ENCODE measurements at regions of chr20 and their contacts with region 1.

Region 1: DNA sequence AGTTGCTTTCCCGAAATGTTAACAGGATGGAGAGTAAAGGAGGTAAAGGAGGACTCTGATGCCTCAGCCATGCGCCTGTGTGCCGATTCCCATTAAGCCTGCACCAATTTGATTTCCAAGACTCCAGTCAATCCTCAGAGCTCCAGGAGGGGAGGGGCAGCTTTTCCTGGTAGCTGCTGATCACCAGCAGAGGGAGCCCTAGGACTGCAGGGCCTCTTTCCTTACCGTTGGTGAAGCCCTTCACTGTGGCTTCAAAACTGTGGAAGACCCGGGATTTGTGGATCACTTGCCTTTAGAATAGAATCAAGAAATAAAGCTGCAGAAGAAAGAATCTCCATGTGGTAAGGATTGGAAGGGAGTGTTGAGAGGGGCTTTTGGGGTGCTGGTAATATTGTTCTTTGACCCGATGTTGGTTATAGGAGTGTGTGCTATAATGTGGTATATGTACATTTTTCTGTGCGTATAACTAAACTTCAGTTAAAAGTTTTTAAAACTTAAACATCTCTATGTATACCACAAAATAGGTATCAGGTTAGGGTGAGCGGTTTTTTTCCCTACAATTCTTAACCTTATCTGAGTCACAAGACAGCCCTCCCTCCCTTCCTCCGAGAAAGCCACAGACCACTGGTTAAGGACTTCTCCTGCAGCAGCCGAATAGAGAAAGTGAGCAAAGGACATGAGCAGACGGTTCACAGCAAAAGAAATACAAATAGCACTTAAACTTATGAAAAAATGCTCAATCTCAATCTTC is 6.9 kb upstream of the OSER1 start:
- DNase-seq: no peak
- ATAC-seq: peak; percentile 80
- H3K4me3 ChIP-seq: no peak overlapping the region
- H3K27ac ChIP-seq: no peak overlapping the region
- H3K4me1 ChIP-seq: peaks cover 14% of the 10 kb centered on the region
- H3K27me3 ChIP-seq: no peaks in the 10 kb centered on the region
- CTCF ChIP-seq: peak; percentile 92 to 97 (median 94)
- EP300 ChIP-seq: no peak
- POLR2A ChIP-seq: no peak
- RAD21 ChIP-seq: peak; percentile 98

Region 2: GRCh38 chr20:44033344-44033743 is 184.2 kb before region 1 on chr20:
- CTCF ChIA-PET with region 1: no interaction called
- POLR2A ChIA-PET with region 1: no interaction called
- RAD21 ChIA-PET with region 1: no interaction called
- SMC1A ChIA-PET with region 1: no interaction called
- in situ Hi-C with region 1: no loop called
- intact Hi-C with region 1: no loop called
- DNase-seq: no peak
- ATAC-seq: no peak
- H3K4me3 ChIP-seq: no peak overlapping the region
- H3K27ac ChIP-seq: no peak overlapping the region
- H3K4me1 ChIP-seq: peaks cover 20% of the 10 kb centered on the region
- H3K27me3 ChIP-seq: no peaks in the 10 kb centered on the region
- CTCF ChIP-seq: no peak
- EP300 ChIP-seq: no peak
- POLR2A ChIP-seq: no peak
- RAD21 ChIP-seq: no peak

Region 3: GRCh38 chr20:44125332-44126127 is 92.0 kb before region 1 on chr20:
- CTCF ChIA-PET with region 1: no interaction called
- POLR2A ChIA-PET with region 1: no interaction called
- RAD21 ChIA-PET with region 1: no interaction called
- SMC1A ChIA-PET with region 1: no interaction called
- in situ Hi-C with region 1: no loop called
- intact Hi-C with region 1: no loop called
- DNase-seq: no peak
- ATAC-seq: no peak
- H3K4me3 ChIP-seq: no peak overlapping the region
- H3K27ac ChIP-seq: no peak overlapping the region
- H3K4me1 ChIP-seq: no peaks in the 10 kb centered on the region
- H3K27me3 ChIP-seq: peaks cover 1 to 3% of the 10 kb centered on the region in 2 experiments; a peak in 3 of 4 replicates
- CTCF ChIP-seq: no peak
- EP300 ChIP-seq: no peak
- POLR2A ChIP-seq: no peak
- RAD21 ChIP-seq: no peak

Region 4: GRCh38 chr20:44170816-44171410 is 46.6 kb before region 1 on chr20:
- CTCF ChIA-PET with region 1: no interaction called
- POLR2A ChIA-PET with region 1: no interaction called
- RAD21 ChIA-PET with region 1: no interaction called
- SMC1A ChIA-PET with region 1: no interaction called
- in situ Hi-C with region 1: no loop called
- intact Hi-C with region 1: no loop called
- DNase-seq: no peak
- ATAC-seq: no peak
- H3K4me3 ChIP-seq: no peak overlapping the region
- H3K27ac ChIP-seq: no peak overlapping the region
- H3K4me1 ChIP-seq: no peaks in the 10 kb centered on the region
- H3K27me3 ChIP-seq: peaks cover 1 to 3% of the 10 kb centered on the region in 2 experiments; a peak in 2 of 4 replicates
- CTCF ChIP-seq: no peak
- EP300 ChIP-seq: no peak
- POLR2A ChIP-seq: no peak
- RAD21 ChIP-seq: no peak

Region 5: GRCh38 chr20:44196271-44196670 is 21.2 kb before region 1 on chr20:
- CTCF ChIA-PET with region 1: interaction called, 12 read pairs
- POLR2A ChIA-PET with region 1: no interaction called
- RAD21 ChIA-PET with region 1: interaction called, 3 read pairs
- SMC1A ChIA-PET with region 1: interaction called, 5 read pairs
- in situ Hi-C with region 1: no loop called
- intact Hi-C with region 1: no loop called
- DNase-seq: no peak
- ATAC-seq: peak; percentile 37; the same call in 2 of the 3 replicates
- H3K4me3 ChIP-seq: no peak overlapping the region
- H3K27ac ChIP-seq: no peak overlapping the region
- H3K4me1 ChIP-seq: no peaks in the 10 kb centered on the region
- H3K27me3 ChIP-seq: no peaks in the 10 kb centered on the region
- CTCF ChIP-seq: peak in 1 of 3 experiments; percentile 15; a peak in 2 of 6 replicates
- EP300 ChIP-seq: no peak
- POLR2A ChIP-seq: no peak
- RAD21 ChIP-seq: no peak

Region 6: DNA sequence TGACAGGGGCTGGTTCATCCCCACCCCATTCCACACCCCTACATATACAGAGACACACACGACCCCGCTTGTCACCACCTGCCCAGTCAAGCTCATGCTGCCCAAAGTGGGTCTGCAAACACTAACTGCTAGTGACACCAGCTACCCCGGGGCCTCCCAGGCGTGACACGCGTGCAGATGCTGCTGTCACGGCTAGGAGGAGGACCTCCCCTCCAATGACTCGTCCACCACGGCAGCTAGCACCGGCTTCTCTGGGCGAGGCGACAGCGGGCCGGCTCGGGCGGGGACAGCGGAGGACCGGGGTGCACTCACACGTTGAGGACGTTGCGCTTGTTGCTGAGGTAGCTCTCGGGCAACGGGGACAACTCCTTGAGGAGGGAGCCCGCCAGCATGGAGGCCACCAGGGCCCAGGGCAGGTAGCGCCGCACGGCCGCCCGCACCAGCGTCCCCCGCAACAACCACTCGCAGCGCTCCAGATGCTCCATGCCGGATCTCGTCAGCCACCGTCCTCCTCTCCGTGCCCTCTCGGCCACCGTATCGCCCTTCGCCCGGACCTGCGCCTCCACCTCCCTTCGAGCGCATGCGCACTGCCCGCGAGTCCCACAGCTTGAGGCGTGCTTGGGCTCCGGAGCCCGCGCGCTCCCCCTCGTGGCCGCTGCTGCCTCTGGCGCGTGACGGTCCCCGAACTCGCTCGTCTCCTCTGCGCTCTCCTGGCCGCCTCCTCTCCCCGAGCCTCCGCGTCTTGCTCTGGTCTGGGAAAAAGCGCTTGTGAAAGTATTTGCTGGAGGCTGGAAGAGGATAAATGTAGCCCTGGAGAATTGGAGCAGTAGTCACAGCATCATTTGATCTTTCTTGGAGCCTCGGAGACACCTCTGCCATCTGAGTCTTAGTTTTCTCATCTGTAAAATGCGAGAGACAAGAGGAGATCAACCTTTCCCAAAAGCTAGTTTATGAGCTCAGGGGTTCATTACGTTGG is 93.4 kb after region 1 on chr20 and contains the start of gene FITM2:
- CTCF ChIA-PET with region 1: interaction called, 257 read pairs
- POLR2A ChIA-PET with region 1: interaction called, 8 read pairs
- RAD21 ChIA-PET with region 1: interaction called, 73 read pairs
- SMC1A ChIA-PET with region 1: interaction called, 118 read pairs
- in situ Hi-C with region 1: loop called (anchors 5 kb)
- intact Hi-C with region 1: loop called (anchors 1 kb)
- DNase-seq: peak; percentile 84
- ATAC-seq: peak; percentile 96
- H3K4me3 ChIP-seq: peak within 1 kb of the TSS; percentile 90
- H3K27ac ChIP-seq: peak within 1 kb of the TSS; percentile 57
- H3K4me1 ChIP-seq: no peaks in the 10 kb centered on the region
- H3K27me3 ChIP-seq: no peaks in the 10 kb centered on the region
- CTCF ChIP-seq: peak; percentile 95 to 99 (median 96); a peak in 5 of 6 replicates
- EP300 ChIP-seq: no peak
- POLR2A ChIP-seq: peak; percentile 80
- RAD21 ChIP-seq: peak; percentile 80
- polyA plus RNA-seq, gene FITM2: 0.46 to 0.61 TPM

Region 7: GRCh38 chr20:44388466-44389023 is 171.0 kb after region 1 on chr20:
- CTCF ChIA-PET with region 1: interaction called, 104 read pairs
- POLR2A ChIA-PET with region 1: no interaction called
- RAD21 ChIA-PET with region 1: interaction called, 12 read pairs
- SMC1A ChIA-PET with region 1: interaction called, 13 read pairs
- in situ Hi-C with region 1: loop called (anchors 5 kb)
- intact Hi-C with region 1: loop called (anchors 1 kb)
- DNase-seq: no peak
- ATAC-seq: peak; percentile 93
- H3K4me3 ChIP-seq: no peak overlapping the region
- H3K27ac ChIP-seq: no peak overlapping the region
- H3K4me1 ChIP-seq: no peaks in the 10 kb centered on the region
- H3K27me3 ChIP-seq: peaks cover 1 to 2% of the 10 kb centered on the region in 2 experiments; a peak in 2 of 4 replicates
- CTCF ChIP-seq: peak; percentile 78 to 90 (median 88)
- EP300 ChIP-seq: no peak
- POLR2A ChIP-seq: no peak
- RAD21 ChIP-seq: peak; percentile 73